Activated T-helper 1 cell treated with anti-CD3 and anti-CD28 coated beads, Interleukin-12 subunit alpha, Interleukin-12 subunit beta, Interleukin-2, Interleukin-4 antibody, amounts not matched to agents 30 ng/mL and 10 ng/mL and 1 ng/mL, durations not matched to agents 14 hours and 24 hours and 36 hours (primary cell): ENCODE measurements at regions of chr2 and their contacts with region 1.

Region 1: DNA sequence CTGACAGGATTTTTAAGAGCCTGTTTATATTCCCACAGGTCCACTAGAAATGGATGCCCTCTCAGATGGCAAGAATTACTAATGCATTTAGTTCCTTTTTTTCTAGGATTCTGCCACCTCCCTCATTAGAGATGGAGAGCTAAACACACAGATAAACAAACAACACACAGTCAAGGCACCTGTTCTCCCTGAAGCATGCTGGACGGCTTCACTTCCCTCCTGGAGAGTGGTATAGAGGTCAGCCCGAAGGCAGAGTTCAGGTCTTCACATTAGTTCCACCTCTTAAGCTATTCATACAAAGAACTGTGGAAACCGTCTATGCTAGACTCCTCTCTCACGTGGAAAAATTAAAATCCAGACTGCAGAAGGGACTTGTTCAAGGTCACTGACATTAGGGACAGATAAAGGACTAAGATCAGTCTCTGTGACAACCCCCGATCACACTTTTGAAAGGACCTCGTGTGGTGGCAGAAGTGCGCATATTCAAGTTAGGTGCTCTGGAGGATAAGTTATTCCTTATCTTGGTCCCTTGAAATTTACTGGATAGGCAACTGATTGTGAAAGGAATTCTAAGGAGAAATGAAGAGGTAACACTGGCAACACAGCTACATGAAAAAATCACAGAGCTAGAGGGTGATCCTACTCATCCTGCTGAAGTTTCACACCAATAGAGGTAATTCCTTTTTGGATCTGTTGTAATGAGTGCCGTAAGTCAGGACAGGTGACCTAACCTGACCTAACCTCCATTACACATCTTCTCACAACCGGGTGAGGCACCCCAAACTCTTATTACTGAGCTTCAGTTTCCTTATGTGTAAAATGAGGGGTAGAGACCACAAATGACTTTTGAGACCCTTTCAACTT is 75.1 kb downstream of the SPRED2 start:
- DNase-seq: no peak
- H3K4me3 Mint-ChIP-seq: no peak overlapping the region
- H3K27ac Mint-ChIP-seq: peak overlapping the region; percentile 24
- H3K4me1 Mint-ChIP-seq: peaks cover 71% of the 10 kb centered on the region
- H3K27me3 Mint-ChIP-seq: peaks cover 2% of the 10 kb centered on the region

Region 2: GRCh38 chr2:65320042-65320725 is 37.1 kb before region 1 on chr2:
- intact Hi-C with region 1: loop called (anchors 2 kb)
- DNase-seq: no peak
- H3K4me3 Mint-ChIP-seq: no peak overlapping the region
- H3K27ac Mint-ChIP-seq: no peak overlapping the region
- H3K4me1 Mint-ChIP-seq: peaks cover 14% of the 10 kb centered on the region
- H3K27me3 Mint-ChIP-seq: peaks cover 3% of the 10 kb centered on the region

Region 3: GRCh38 chr2:65382776-65383357 is 25.5 kb after region 1 on chr2:
- intact Hi-C with region 1: loop called (anchors 2 kb)
- DNase-seq: peak; percentile 63
- H3K4me3 Mint-ChIP-seq: peak overlapping the region; percentile 56
- H3K27ac Mint-ChIP-seq: peak overlapping the region; percentile 62
- H3K4me1 Mint-ChIP-seq: peaks cover 67% of the 10 kb centered on the region
- H3K27me3 Mint-ChIP-seq: peaks cover 7% of the 10 kb centered on the region

Region 4: DNA sequence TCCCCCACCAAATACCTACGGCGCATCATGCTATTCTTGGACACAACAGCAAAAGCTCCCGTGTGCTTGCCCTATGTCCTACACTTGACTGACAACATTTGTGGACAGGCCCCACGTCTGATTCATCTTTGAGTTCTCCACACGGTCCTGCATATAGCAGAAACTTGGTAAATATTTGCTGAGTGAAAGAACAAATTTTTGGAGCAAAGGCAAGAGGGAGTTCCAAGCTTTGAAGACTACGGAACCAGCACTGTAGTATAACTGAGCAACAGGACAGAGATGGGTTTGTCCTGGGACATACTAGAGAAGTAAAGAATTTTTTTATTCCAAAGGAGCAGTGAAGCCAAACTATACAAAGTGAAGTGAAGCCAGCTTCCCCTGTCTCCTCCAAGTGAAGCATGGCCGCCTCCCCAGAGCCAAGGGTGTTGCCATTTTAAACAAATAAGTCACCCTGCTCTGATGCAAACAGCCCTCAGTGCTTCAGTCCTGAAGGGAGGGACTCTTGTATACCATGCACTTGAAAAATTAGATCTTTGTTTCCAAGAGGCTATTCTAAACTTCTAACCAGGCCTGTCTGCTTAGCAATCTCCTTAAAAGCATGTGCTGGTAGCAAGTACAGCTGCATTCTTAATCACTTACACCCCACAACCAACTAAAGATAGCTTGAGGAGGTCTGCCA is 39.2 kb after region 1 on chr2:
- intact Hi-C with region 1: loop called (anchors 5 kb)
- DNase-seq: no peak
- H3K4me3 Mint-ChIP-seq: no peak overlapping the region
- H3K27ac Mint-ChIP-seq: peak overlapping the region; percentile 50
- H3K4me1 Mint-ChIP-seq: peaks cover 47% of the 10 kb centered on the region
- H3K27me3 Mint-ChIP-seq: peaks cover 7% of the 10 kb centered on the region

Region 5: GRCh38 chr2:65416945-65417344 is 59.6 kb after region 1 on chr2:
- intact Hi-C with region 1: loop called (anchors 5 kb)
- DNase-seq: no peak
- H3K4me3 Mint-ChIP-seq: no peak overlapping the region
- H3K27ac Mint-ChIP-seq: peak overlapping the region; percentile 65
- H3K4me1 Mint-ChIP-seq: peaks cover 36% of the 10 kb centered on the region
- H3K27me3 Mint-ChIP-seq: peaks cover 6% of the 10 kb centered on the region

Region 6: GRCh38 chr2:65554765-65555591 is 197.7 kb after region 1 on chr2:
- intact Hi-C with region 1: loop called (anchors 5 kb)
- DNase-seq: no peak
- H3K4me3 Mint-ChIP-seq: peak overlapping the region; percentile 6
- H3K27ac Mint-ChIP-seq: peak overlapping the region; percentile 38
- H3K4me1 Mint-ChIP-seq: peaks cover 16% of the 10 kb centered on the region
- H3K27me3 Mint-ChIP-seq: peaks cover 30% of the 10 kb centered on the region